Activated naive CD4-positive, alpha-beta T cell treated with anti-CD3 and anti-CD28 coated beads for 36 hours (primary cell): ENCODE measurements at regions of chr17 and their contacts with region 1.

Region 1: DNA sequence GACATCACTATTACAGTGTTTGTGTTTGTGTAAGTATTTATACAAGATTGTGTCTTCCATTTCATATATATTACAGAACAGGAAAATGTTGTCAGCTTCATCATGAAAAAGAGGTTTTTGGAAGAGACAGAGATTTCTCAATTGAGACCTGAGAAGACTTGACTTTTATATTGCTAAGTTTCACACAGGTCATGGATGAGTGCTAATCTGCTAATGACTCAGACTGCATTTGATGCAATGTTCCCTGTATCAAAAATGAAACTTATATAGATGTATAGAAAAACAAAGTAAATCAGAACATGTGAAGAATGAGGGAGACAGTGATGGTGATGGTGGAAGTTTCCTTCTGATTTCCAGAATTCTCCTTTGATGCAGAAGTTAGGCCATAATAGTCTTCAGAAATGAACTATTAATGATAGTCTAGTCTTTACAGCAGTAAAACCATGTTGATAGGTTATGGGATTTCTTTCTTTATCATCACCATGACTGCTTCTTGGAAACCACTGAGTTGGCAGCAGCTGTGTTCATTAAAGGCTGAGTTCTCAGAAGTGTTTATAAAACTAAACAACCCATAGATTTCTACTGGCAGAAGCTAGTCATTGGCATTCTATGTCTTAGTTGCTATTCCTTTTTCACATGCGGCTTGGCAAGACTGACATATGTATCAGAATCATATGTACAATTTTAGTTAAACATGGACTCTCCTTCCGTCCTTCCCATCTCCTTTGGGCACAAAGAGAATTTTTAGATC is 56.1 kb downstream of the PCTP start:
- DNase-seq: peak; percentile 53
- H3K4me3 Mint-ChIP-seq: no peak overlapping the region
- H3K27ac Mint-ChIP-seq: peak overlapping the region; percentile 75
- H3K4me1 Mint-ChIP-seq: peaks cover 10% of the 10 kb centered on the region
- H3K27me3 Mint-ChIP-seq: peaks cover 10% of the 10 kb centered on the region

Region 2: DNA sequence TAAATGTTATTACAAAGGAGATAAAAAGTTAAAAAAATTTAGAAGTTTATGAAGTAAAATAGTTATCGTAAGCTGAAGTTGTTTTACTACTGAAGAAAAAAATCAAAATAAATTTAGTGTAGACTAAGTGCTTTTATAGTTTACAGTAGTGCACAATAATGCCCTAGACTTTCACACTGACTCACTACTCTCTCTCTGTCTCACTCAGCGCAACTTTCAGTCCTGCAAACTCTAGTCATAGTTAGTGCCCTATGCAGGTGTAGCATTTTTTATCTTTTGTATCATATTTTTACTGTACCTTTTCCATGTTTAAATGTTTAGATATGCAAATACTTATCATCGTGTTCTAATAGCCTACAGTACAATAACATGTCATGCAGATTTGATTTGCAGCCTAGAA is 924.0 kb before region 1 on chr17:
- CTCF ChIA-PET with region 1: no interaction called
- intact Hi-C with region 1: loop called (anchors 10 kb)
- DNase-seq: peak; percentile 38
- H3K4me3 Mint-ChIP-seq: no peak overlapping the region
- H3K27ac Mint-ChIP-seq: no peak overlapping the region
- H3K4me1 Mint-ChIP-seq: no peaks in the 10 kb centered on the region
- H3K27me3 Mint-ChIP-seq: peaks cover 12% of the 10 kb centered on the region

Region 3: DNA sequence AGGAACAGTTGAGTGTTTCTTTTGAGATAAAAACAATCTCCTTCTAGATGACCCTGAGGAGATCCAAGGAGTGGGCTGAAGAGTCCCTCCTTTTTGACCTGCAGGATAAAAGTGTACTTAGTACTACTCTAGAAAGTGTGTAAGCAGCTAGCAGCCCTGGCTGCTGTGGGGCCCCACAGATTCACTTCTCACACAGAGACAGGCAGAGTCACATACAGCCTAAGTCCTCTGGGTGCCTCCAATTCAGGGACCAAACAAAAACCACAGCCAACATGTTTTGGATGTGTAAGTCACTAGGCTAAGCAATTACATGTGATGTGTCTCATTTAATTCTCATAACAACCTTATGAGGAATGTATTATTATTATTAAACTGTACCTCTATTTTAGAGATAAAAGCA is 181.4 kb before region 1 on chr17:
- CTCF ChIA-PET with region 1: no interaction called
- intact Hi-C with region 1: loop called (anchors 1 kb)
- DNase-seq: peak; percentile 27
- H3K4me3 Mint-ChIP-seq: no peak overlapping the region
- H3K27ac Mint-ChIP-seq: no peak overlapping the region
- H3K4me1 Mint-ChIP-seq: peaks cover 8% of the 10 kb centered on the region
- H3K27me3 Mint-ChIP-seq: peaks cover 31% of the 10 kb centered on the region

Region 4: DNA sequence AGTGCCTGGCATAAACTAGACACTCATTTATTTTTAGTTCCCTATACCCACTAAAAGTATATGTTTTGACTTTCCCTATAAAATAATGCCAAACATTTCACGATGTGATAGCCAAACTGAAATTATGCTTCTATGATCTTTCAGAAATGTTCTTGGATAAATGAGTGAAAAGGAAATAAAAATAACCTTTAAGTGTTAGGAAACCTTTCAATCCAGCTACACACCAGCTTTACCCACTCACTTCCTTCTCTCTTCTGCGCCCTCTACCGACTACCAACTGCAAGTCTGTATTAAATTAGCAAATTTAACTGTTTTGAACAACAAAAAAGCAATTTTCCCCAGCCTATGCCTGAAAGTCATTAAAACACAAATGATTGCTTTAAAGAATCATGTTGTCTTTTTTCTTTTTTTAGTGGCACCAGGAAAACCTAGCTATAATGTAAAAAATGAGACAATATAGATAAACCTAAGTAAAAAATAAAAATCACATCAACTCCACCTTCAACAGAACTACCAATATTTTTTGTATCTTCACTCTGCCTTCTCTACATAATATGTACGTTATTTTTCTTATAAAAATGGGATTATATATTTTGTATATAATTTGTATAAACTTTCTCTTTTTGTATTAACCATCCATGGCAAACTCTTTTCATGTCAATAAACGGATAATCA is 71.1 kb before region 1 on chr17:
- CTCF ChIA-PET with region 1: interaction called, 3 read pairs
- intact Hi-C with region 1: loop called (anchors 1 kb)
- DNase-seq: peak; percentile 64
- H3K4me3 Mint-ChIP-seq: no peak overlapping the region
- H3K27ac Mint-ChIP-seq: no peak overlapping the region
- H3K4me1 Mint-ChIP-seq: peaks cover 30% of the 10 kb centered on the region
- H3K27me3 Mint-ChIP-seq: peaks cover 27% of the 10 kb centered on the region

Region 5: DNA sequence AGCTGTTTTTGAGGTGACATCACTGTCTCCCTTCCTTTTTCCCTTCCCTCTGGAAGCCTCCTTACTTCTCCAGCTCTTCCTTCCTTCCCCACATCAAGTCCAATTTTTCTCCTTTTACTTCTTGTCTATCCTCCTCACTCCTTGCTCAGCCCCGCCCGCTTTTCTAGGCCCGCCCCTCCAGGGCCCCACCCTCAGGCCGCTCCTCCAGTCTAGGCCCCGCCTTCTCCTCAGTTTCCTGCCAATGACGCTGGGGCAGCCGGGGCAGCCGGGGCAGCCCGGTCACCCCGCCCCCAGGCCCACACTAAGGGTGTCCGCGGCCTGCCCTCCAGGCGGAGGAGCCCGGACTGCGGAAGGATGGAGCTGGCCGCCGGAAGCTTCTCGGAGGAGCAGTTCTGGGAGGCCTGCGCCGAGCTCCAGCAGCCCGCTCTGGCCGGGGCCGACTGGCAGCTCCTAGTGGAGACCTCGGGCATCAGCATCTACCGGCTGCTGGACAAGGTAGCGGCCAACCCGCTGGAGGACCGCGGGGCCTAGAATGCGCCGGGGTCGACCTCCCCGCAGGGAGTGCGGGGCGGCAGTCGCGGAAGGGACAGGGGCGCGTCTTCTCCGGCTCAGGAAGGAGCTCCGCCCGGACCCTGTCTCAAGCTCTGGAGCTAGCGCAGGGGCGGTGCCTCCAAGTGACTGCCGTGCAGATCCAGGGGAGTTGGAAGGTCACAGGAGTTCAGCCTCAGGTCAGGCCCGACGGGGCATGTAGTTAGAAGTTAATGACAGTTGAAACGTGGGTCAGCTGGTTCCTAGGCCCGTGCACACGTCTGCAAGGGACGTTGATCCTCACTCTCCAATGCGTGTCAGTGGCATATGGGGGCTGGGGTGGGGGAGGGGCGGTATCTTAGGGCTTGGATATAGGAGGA is 55.9 kb before region 1 on chr17 and contains the start of gene PCTP:
- CTCF ChIA-PET with region 1: no interaction called
- intact Hi-C with region 1: loop called (anchors 5 kb)
- DNase-seq: peak; percentile 92
- H3K4me3 Mint-ChIP-seq: peak within 1 kb of the TSS; percentile 82
- H3K27ac Mint-ChIP-seq: no peak within 1 kb of the TSS
- H3K4me1 Mint-ChIP-seq: peaks cover 12% of the 10 kb centered on the region
- H3K27me3 Mint-ChIP-seq: peaks cover 18% of the 10 kb centered on the region
- total RNA-seq, gene PCTP: 8.8 to 10.3 TPM

Region 6: DNA sequence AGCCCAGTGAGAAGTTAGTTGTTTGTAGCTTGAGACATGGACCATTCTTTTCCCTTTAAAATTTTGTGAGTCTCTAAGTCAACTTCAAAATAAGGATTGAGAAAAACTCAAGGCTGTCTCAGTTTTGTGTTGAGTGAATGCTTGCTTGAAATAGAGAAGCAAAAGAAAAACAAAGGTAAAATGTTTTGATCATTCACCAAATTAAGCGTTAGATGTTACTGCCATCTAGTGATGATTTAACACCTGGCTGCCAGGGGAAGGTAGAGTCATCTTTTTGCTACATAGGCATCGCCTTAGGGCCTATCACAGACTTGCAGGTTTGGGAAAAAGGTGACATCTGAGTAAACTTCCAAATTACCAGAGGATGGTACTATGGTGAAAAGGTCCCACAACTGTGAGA is 18.3 kb after region 1 on chr17:
- CTCF ChIA-PET with region 1: interaction called, 4 read pairs
- intact Hi-C with region 1: loop called (anchors 2 kb)
- DNase-seq: peak; percentile 18
- H3K4me3 Mint-ChIP-seq: no peak overlapping the region
- H3K27ac Mint-ChIP-seq: no peak overlapping the region
- H3K4me1 Mint-ChIP-seq: no peaks in the 10 kb centered on the region
- H3K27me3 Mint-ChIP-seq: peaks cover 8% of the 10 kb centered on the region

Region 7: GRCh38 chr17:56085588-56086267 is 278.8 kb after region 1 on chr17:
- CTCF ChIA-PET with region 1: no interaction called
- intact Hi-C with region 1: no loop called
- DNase-seq: peak; percentile 5
- H3K4me3 Mint-ChIP-seq: no peak overlapping the region
- H3K27ac Mint-ChIP-seq: no peak overlapping the region
- H3K4me1 Mint-ChIP-seq: no peaks in the 10 kb centered on the region
- H3K27me3 Mint-ChIP-seq: peaks cover 11% of the 10 kb centered on the region